Esophagus muscularis mucosa (tissue), 4 donors: ENCODE measurements at regions of chr15 and their contacts with region 1.

Region 1: DNA sequence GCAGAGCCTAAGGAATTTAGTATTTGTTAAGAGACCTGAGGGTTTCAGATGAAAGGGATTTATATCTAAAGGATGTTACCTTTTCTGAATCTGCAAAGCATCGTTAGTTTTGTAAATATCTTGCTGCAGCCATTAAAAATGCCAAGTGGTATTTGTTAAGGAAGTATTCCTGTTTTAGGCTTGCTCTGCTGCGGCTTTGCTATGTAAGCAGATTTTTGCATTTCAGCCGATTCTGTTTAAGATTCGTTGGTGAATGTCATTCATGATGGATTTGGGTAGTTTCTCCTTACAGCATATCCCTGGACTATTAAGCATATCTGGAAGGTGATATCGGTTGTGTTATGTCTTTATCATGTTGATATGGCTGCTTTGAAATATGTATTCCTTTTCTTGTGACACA is 1.0 kb downstream of the USP8 start:
- DNase-seq: no peak
- H3K4me3 ChIP-seq: peak overlapping the region; percentile 86 to 96 (median 90)
- H3K27ac ChIP-seq: peak overlapping the region; percentile 89 to 94 (median 94)
- H3K4me1 ChIP-seq: peaks cover 19 to 43% (median 39%) of the 10 kb centered on the region in 4 donors
- H3K27me3 ChIP-seq: no peaks in the 10 kb centered on the region
- CTCF ChIP-seq: no peak
- EP300 ChIP-seq: no peak
- POLR2A ChIP-seq: no peak

Region 2: GRCh38 chr15:50354838-50355618 is 70.2 kb before region 1 on chr15 and contains the start of gene GABPB1:
- intact Hi-C with region 1: loop called (anchors 5 kb)
- DNase-seq: peak; percentile 94
- H3K4me3 ChIP-seq: peak within 1 kb of the TSS; percentile 85 to 98 (median 93)
- H3K27ac ChIP-seq: peak within 1 kb of the TSS; percentile 98 to 100 (median 99)
- H3K4me1 ChIP-seq: peaks cover 42 to 57% (median 52%) of the 10 kb centered on the region in 4 donors
- H3K27me3 ChIP-seq: no peaks in the 10 kb centered on the region
- CTCF ChIP-seq: no peak
- EP300 ChIP-seq: no peak
- POLR2A ChIP-seq: peak; percentile 64
- total RNA-seq, gene GABPB1: 13.2 to 23.5 (median 15.4) TPM